ENCODE measurements at regions of chr20 and their contacts with region 1.

Region 1: GRCh38 chr20:62182613-62183425 is at the start of gene MTG2:
- DNase-seq: peak; percentile 96
- H3K4me3 Mint-ChIP-seq: peak within 1 kb of the TSS; percentile 87
- H3K27ac Mint-ChIP-seq: peak within 1 kb of the TSS; percentile 84
- H3K4me1 Mint-ChIP-seq: peaks cover 38% of the 10 kb centered on the region
- H3K27me3 Mint-ChIP-seq: no peaks in the 10 kb centered on the region
- total RNA-seq, gene MTG2: 34.3 to 36.4 TPM

Region 2: DNA sequence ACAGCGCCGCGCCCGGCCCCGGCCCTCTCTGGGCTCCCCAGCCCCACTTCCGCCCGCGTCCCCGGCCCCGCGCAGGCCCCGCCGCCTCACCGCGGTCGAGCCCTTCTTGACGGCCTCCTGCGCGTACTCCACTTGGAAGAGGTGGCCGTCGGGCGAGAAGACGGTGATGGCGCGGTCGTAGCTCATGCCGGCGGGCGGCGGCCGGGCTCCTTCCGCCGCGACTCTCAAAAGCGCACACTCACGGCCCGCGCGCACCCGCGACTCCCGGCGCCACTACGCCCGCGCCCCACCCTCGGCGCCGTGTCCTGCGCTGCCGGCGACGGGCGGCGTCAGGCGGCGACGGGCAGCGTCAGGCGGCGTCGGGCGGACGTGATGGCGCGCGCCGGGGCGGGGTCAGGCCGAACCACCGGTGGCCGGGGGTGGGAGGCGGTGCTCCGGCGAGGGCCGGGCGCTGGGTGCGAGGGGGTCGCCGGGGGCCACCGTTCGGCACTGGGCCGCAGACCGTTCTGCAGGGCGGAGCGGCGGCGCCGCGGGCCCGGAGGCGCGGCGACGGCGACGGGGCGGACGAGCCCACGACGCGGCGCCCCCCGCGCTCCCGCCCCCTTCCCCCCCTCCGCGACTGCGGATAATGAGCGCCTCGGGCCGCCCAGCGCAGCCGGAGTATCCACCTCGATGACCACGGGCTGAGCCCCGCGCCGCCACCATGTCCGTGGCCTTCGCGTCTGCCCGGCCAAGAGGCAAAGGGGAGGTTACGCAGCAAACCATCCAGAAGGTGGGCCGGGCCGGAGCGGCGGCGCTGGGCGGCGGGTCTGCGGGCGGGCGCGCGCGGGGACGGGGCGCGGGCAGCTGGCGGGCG is 39.5 kb before region 1 on chr20 and contains the starts of genes PSMA7 and SS18L1:
- CTCF ChIA-PET with region 1: interaction called, 3 read pairs
- intact Hi-C with region 1: loop called (anchors 1 kb)
- DNase-seq: peak; percentile 82
- H3K4me3 Mint-ChIP-seq: peak within 1 kb of the TSS; percentile 83
- H3K27ac Mint-ChIP-seq: peak within 1 kb of the TSS; percentile 87
- H3K4me1 Mint-ChIP-seq: peaks cover 55% of the 10 kb centered on the region
- H3K27me3 Mint-ChIP-seq: no peaks in the 10 kb centered on the region
- total RNA-seq, gene PSMA7: 287 to 288 TPM
- total RNA-seq, gene SS18L1: 14.5 to 18.0 TPM

Region 3: GRCh38 chr20:62237801-62238571 is 55.2 kb after region 1 on chr20 and contains the start of gene OSBPL2:
- CTCF ChIA-PET with region 1: no interaction called
- intact Hi-C with region 1: loop called (anchors 1 kb)
- DNase-seq: peak; percentile 100
- H3K4me3 Mint-ChIP-seq: peak within 1 kb of the TSS; percentile 78
- H3K27ac Mint-ChIP-seq: peak within 1 kb of the TSS; percentile 79
- H3K4me1 Mint-ChIP-seq: peaks cover 28% of the 10 kb centered on the region
- H3K27me3 Mint-ChIP-seq: no peaks in the 10 kb centered on the region
- total RNA-seq, gene OSBPL2: 23.6 to 24.7 TPM